ENCODE measurements at regions of chr3 and their contacts with region 1.

Region 1: DNA sequence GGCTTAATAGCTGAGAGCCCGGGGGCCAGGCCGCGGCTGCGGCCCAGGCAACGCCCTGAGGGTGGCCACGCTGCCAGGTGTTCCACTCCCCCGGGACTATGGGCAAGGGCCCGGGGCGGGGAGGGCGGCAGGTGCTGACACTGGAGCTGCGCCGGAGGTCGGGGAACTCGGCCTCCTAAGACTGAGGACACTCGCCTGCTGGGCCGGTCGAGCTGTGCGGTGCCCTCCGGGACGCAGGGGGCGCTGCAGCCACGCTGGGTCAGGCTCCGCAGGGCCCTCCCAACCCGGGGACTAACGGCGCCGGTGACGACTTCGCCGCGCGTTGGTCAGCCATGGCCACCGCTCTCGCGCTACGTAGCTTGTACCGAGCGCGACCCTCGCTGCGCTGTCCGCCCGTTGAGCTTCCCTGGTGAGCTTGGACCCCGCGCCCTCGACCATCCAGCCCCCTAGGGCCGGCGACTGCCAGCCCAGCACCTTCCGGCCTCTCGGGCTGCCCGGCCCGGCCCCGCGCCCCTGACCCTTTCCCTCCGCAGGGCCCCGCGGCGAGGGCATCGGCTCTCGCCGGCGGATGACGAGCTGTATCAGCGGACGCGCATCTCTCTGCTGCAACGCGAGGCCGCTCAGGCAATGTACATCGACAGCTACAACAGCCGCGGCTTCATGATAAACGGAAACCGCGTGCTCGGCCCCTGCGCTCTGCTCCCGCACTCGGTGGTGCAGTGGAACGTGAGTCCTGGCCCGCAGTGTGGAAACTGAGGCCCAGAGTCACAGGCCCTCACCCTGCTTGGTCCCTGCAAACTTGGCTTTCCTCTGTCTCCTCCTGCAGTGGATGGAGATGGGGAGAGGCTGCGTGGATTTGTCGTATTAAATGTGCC is at the start of gene NDUFAF3:
- DNase-seq: peak; percentile 74
- ATAC-seq: peak; percentile 81
- H3K4me3 ChIP-seq: peak within 1 kb of the TSS; percentile 95
- H3K27ac ChIP-seq: peak within 1 kb of the TSS; percentile 94
- H3K4me1 ChIP-seq: peaks cover 21% of the 10 kb centered on the region
- H3K27me3 ChIP-seq: no peaks in the 10 kb centered on the region
- CTCF ChIP-seq: peak; percentile 95 to 97 (median 95)
- EP300 ChIP-seq: peak in 1 of 2 experiments; percentile 25; a peak in 1 of 4 replicates
- POLR2A ChIP-seq: no peak
- RAD21 ChIP-seq: 0 out of 2 replicates have a peak, but pooled peaks have one; percentile 14
- polyA plus RNA-seq, gene NDUFAF3: 31.3 to 40.2 TPM

Region 2: GRCh38 chr3:49007068-49007770 is 14.8 kb before region 1 on chr3 and contains the start of gene WDR6:
- CTCF ChIA-PET with region 1: interaction called, 83 read pairs
- POLR2A ChIA-PET with region 1: interaction called, 69 read pairs
- RAD21 ChIA-PET with region 1: interaction called, 40 read pairs
- SMC1A ChIA-PET with region 1: interaction called, 21 read pairs
- in situ Hi-C with region 1: no loop called
- intact Hi-C with region 1: loop called (anchors 1 kb)
- DNase-seq: peak; percentile 96
- ATAC-seq: peak; percentile 94
- H3K4me3 ChIP-seq: peak within 1 kb of the TSS; percentile 83
- H3K27ac ChIP-seq: peak within 1 kb of the TSS; percentile 89
- H3K4me1 ChIP-seq: peaks cover 16% of the 10 kb centered on the region
- H3K27me3 ChIP-seq: no peaks in the 10 kb centered on the region
- CTCF ChIP-seq: peak; percentile 41 to 48 (median 47); a peak in 5 of 6 replicates
- EP300 ChIP-seq: peak in 1 of 2 experiments; percentile 35; a peak in 1 of 4 replicates
- POLR2A ChIP-seq: peak; percentile 99
- RAD21 ChIP-seq: no peak
- polyA plus RNA-seq, gene WDR6: 21.3 to 24.1 TPM

Region 3: DNA sequence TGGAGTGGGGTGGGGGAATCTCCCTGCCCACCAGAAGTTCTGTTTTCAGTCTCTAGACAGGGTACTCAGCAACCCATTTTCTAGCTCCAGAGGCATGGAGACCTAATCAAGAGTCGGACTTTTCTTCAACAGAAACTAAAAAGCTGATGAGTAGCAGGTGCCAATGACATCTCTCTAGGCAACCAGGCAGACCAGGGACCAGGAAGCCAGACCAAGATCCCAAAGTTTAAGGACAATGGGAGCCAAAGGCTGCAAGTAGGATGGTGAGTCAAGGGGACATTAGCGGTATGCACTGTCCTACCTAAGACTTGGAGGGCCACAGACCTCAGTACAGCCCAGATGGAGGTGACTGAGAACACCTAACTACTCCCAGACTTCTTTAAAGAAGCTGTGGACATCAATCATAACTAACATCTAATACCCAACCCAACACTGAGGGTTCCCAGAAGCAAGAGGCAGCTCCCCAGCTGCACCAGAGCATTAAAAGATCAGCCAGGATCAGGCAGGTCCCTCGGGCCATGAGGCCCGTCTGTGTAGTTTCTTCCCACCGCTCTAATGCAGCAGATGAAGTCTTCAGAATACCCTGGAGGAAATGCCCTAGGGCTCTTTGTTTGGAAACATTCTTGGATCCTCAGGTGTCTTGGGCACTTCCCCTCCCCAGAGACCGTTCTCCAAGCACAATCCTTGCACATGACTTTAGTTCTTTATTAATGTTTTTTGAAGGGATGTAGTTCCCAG is 143.1 kb after region 1 on chr3:
- CTCF ChIA-PET with region 1: no interaction called
- POLR2A ChIA-PET with region 1: no interaction called
- RAD21 ChIA-PET with region 1: no interaction called
- SMC1A ChIA-PET with region 1: no interaction called
- in situ Hi-C with region 1: no loop called
- intact Hi-C with region 1: no loop called
- DNase-seq: no peak
- ATAC-seq: peak; percentile 8; the same call in 1 of the 3 replicates
- H3K4me3 ChIP-seq: peak overlapping the region; percentile 84
- H3K27ac ChIP-seq: peak overlapping the region; percentile 65
- H3K4me1 ChIP-seq: peaks cover 10% of the 10 kb centered on the region
- H3K27me3 ChIP-seq: no peaks in the 10 kb centered on the region
- CTCF ChIP-seq: no peak
- EP300 ChIP-seq: no peak
- POLR2A ChIP-seq: peak; percentile 12; the same call in 1 of the 2 replicates
- RAD21 ChIP-seq: no peak

Region 4: GRCh38 chr3:49673715-49674496 is 651.9 kb after region 1 on chr3 and contains the start of gene APEH:
- CTCF ChIA-PET with region 1: no interaction called
- POLR2A ChIA-PET with region 1: no interaction called
- RAD21 ChIA-PET with region 1: no interaction called
- SMC1A ChIA-PET with region 1: no interaction called
- in situ Hi-C with region 1: no loop called
- intact Hi-C with region 1: loop called (anchors 10 kb)
- DNase-seq: peak; percentile 95
- ATAC-seq: peak; percentile 91
- H3K4me3 ChIP-seq: peak within 1 kb of the TSS; percentile 94
- H3K27ac ChIP-seq: peak within 1 kb of the TSS; percentile 86
- H3K4me1 ChIP-seq: peaks cover 10% of the 10 kb centered on the region
- H3K27me3 ChIP-seq: no peaks in the 10 kb centered on the region
- CTCF ChIP-seq: no peak
- EP300 ChIP-seq: no peak; a peak in 1 of 4 replicates
- POLR2A ChIP-seq: peak; percentile 90
- RAD21 ChIP-seq: no peak
- polyA plus RNA-seq, gene APEH: 74.4 to 102 TPM

Measured in GM12878 (cell line).